MCF 10A (cell line): ENCODE measurements at regions of chr6 and their contacts with region 1.

Region 1: GRCh38 chr6:87393022-87393622 is 14.7 kb upstream of the CFAP206 start:
- DNase-seq: peak; percentile 58
- H3K4me3 Mint-ChIP-seq: no peak overlapping the region
- H3K27ac Mint-ChIP-seq: no peak overlapping the region
- H3K4me1 Mint-ChIP-seq: no peaks in the 10 kb centered on the region
- H3K27me3 Mint-ChIP-seq: no peaks in the 10 kb centered on the region
- CTCF ChIP-seq: peak; percentile 71

Region 2: DNA sequence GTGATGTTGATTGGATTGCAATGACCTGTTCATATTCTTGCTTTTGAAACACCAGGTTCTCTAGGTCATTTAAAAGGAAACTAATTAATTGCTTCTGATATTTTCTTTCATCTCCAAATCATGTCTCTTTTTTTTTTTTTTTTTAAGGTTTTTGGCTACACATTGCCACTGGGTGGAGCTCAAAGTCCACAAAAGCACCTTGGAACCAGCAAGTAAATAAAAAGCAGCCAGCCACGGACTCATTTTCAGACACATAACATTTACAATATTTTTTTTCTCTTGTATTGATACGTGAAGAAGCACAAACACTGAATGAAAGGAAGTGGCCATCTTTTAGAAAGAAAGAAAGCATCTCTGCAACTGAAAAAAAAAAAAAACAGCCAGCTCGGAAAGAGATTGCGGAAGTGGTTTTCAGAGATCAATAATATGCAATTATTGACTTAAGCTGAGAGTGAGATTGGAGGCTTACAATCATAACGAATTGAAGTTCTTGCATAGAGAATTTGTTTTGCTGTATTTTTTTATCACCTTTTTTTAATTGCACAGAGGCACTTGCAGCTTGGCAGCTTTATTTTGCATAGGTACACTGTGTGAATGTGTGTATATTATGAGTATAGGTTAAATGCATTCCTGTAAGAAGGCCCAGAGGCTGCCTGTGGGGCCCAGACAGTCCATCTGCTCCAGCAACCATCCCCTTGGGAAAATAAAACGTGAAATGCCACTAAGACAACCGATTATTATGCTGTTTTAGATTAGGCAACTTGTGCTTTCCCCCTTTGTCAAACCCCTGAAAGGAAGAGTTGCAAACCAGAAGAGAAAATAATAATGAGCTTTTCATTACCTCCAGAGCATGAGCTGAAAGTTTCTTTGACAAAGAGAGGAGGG is 326.4 kb before region 1 on chr6:
- CTCF ChIA-PET with region 1: interaction called, 10 read pairs
- POLR2A ChIA-PET with region 1: no interaction called
- intact Hi-C with region 1: loop called (anchors 1 kb)
- DNase-seq: peak; percentile 62
- H3K4me3 Mint-ChIP-seq: peak overlapping the region; percentile 60
- H3K27ac Mint-ChIP-seq: no peak overlapping the region
- H3K4me1 Mint-ChIP-seq: peaks cover 10% of the 10 kb centered on the region
- H3K27me3 Mint-ChIP-seq: peaks cover 41% of the 10 kb centered on the region
- CTCF ChIP-seq: peak; percentile 72

Region 3: DNA sequence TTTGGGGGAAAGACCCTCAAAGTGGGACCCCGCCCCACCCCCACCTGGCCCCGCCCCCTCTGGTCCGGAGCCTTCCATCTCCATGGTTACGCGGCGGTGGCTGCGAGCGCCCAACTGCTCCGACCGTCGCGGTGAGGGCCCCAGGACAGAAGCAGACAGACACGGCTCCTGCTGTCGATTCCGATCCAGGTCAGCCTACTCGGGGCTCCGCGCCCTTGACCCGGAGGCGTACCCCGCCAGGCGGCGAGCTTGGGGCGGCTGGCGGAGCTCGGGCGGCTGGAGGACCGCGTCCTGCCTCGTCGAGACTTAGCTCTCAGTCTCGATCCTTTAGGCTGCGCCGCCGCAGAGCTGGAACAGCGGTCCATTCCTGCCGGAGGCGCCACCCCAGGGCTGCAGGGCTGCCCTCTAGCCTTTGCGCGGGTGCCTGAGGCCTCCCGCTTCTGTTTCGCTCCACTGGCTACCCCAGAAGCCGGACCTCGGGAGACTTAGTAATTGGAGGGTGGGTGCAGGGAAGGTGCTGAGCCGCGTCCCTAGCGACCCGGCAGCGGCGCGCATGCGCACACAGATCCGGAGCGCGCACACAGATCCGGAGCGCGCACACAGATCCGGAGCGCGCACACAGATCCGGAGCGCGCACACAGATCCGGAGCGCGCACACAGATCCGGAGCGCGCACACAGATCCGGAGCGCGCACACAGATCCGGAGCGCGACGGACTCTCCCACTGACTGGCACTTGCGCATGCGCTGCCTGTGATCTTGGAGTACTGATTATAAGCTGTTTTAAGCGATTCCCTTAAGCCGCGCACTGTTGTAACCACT is 15.0 kb after region 1 on chr6 and contains the start of gene CFAP206:
- CTCF ChIA-PET with region 1: interaction called, 43 read pairs
- POLR2A ChIA-PET with region 1: no interaction called
- intact Hi-C with region 1: no loop called
- DNase-seq: peak; percentile 76
- H3K4me3 Mint-ChIP-seq: peak within 1 kb of the TSS; percentile 80
- H3K27ac Mint-ChIP-seq: peak within 1 kb of the TSS; percentile 37
- H3K4me1 Mint-ChIP-seq: no peaks in the 10 kb centered on the region
- H3K27me3 Mint-ChIP-seq: peaks cover 15% of the 10 kb centered on the region
- CTCF ChIP-seq: peak; percentile 19
- total RNA-seq, gene CFAP206: 0.27 TPM in 1 of 2 replicates, not detected in the other

Region 4: GRCh38 chr6:87799651-87800050 is 406.5 kb after region 1 on chr6:
- CTCF ChIA-PET with region 1: no interaction called
- POLR2A ChIA-PET with region 1: no interaction called
- intact Hi-C with region 1: loop called (anchors 5 kb)
- DNase-seq: no peak
- H3K4me3 Mint-ChIP-seq: no peak overlapping the region
- H3K27ac Mint-ChIP-seq: no peak overlapping the region
- H3K4me1 Mint-ChIP-seq: peaks cover 18% of the 10 kb centered on the region
- H3K27me3 Mint-ChIP-seq: no peaks in the 10 kb centered on the region
- CTCF ChIP-seq: no peak

Region 5: DNA sequence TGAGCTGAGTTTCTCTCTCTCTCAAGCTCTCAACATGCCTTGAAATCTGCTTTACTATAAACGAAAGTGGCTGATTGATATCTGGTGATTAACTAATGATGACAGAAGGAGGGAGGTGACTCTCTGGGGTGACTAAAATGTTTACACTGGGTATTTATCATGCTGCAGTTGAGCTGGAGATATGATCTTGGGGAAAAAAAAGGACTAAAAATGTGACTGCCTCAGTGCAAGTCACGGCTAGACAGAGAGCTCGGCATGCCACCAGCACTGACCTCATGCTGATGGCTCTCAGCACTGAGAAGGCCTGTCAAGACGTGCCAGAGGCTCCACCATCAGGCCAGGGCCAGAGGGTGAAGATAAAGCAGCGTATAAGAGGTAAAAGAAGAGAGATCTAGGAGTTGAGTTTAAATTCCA is 551.4 kb after region 1 on chr6:
- CTCF ChIA-PET with region 1: interaction called, 4 read pairs
- POLR2A ChIA-PET with region 1: no interaction called
- intact Hi-C with region 1: loop called (anchors 5 kb)
- DNase-seq: peak; percentile 68
- H3K4me3 Mint-ChIP-seq: no peak overlapping the region
- H3K27ac Mint-ChIP-seq: peak overlapping the region; percentile 43
- H3K4me1 Mint-ChIP-seq: peaks cover 23% of the 10 kb centered on the region
- H3K27me3 Mint-ChIP-seq: peaks cover 11% of the 10 kb centered on the region
- CTCF ChIP-seq: peak; percentile 22

Region 6: DNA sequence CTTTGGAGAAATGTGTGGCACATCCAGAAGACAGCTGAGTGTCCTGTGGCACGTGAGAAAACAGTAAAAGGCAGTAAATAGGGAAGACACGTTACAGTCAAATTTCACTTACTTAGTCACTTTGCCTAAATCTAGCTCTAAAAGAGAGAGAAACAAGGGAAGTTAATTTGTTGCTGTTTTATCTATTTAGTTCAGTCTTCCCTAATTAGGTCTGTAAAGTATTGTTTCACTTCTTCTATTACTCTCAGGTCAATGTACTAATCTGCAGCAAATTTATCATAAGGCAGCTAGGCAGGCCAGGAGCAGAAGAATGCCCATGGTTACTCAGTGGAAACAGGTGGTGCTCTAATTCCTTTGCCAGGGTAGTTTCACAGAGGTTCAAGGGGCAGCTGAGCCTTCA is 897.3 kb after region 1 on chr6:
- CTCF ChIA-PET with region 1: no interaction called
- POLR2A ChIA-PET with region 1: no interaction called
- intact Hi-C with region 1: no loop called
- DNase-seq: no peak
- H3K4me3 Mint-ChIP-seq: no peak overlapping the region
- H3K27ac Mint-ChIP-seq: no peak overlapping the region
- H3K4me1 Mint-ChIP-seq: peaks cover 5% of the 10 kb centered on the region
- H3K27me3 Mint-ChIP-seq: no peaks in the 10 kb centered on the region
- CTCF ChIP-seq: no peak